T-cell (primary cell): ENCODE measurements at regions of chr14 and their contacts with region 1.

Region 1: DNA sequence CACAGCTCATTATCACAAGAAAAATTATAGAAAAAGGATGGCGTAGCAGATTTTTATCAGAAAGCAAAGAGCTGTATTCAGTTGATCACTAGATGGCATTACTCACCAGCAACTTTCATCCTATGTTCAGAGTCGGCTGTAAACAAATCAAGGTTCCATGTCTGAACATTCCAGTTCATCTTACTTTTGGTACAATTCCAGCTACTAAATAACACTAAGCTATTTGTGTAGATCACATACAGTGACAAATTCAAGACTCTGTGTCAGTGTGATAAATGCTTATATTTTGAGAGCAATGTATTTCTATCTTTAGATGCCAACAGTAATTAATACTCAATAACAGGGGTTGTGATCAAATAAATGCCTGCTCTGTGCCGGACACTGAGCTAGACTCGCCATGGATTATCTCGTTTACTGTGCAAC is 30.1 kb downstream of the NRDE2 start:
- DNase-seq: peak in 1 of 35 experiments; percentile 34
- ATAC-seq: no peak
- H3K4me3 ChIP-seq: no peak overlapping the region
- H3K4me3 Mint-ChIP-seq: no peak overlapping the region
- H3K27ac ChIP-seq: no peak overlapping the region
- H3K27ac Mint-ChIP-seq: peak overlapping the region in 1 of 2 donors; percentile 24
- H3K4me1 ChIP-seq: peaks cover 0 to 2% of the 10 kb centered on the region in 2 experiments
- H3K4me1 Mint-ChIP-seq: peaks cover 11 to 15% (median 15%) of the 10 kb centered on the region in 3 donors
- H3K27me3 ChIP-seq: no peaks in the 10 kb centered on the region
- H3K27me3 Mint-ChIP-seq: no peaks in the 10 kb centered on the region

Region 2: DNA sequence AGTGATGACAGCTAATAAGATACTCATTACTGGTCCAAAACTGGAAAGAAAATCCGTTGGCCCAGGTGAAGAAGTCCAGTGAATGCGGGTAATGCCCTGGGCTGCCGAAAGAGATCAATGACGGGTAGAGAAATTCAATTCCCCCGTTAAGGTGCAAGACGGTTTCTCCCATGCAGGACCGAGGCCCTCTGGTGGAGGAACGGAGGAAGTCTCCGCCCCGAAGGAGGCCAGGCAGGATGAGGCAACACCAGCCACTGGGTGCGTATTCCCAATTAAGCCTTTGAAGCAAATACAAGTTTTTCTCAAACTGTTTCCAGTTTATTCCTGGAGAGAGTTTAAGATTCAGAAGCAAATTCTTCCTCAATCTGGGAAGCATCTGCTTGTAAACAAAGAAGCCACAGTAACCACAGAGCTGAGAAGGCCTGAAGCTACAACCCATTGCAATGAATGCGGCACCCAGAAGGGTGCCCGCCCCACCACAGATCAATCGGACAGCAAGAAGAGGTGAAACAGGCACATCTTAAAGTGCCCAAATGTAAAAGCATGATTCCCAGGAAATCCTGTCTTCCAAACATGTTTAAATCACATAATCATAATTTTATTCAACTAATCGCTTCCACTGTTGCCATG is 396.0 kb after region 1 on chr14:
- CTCF ChIA-PET with region 1: interaction called in 1 of 2 experiments, 22 read pairs
- POLR2A ChIA-PET with region 1: no interaction called
- DNase-seq: peak; percentile 47 to 79 (median 67)
- ATAC-seq: peak; percentile 79 to 96 (median 88)
- H3K4me3 ChIP-seq: no peak overlapping the region
- H3K4me3 Mint-ChIP-seq: no peak overlapping the region
- H3K27ac ChIP-seq: no peak overlapping the region
- H3K27ac Mint-ChIP-seq: no peak overlapping the region
- H3K4me1 ChIP-seq: peaks cover 0 to 4% of the 10 kb centered on the region in 2 experiments
- H3K4me1 Mint-ChIP-seq: peaks cover 0 to 7% (median 7%) of the 10 kb centered on the region in 3 donors
- H3K27me3 ChIP-seq: no peaks in the 10 kb centered on the region
- H3K27me3 Mint-ChIP-seq: peaks cover 0 to 1% of the 10 kb centered on the region in 2 donors

Region 3: GRCh38 chr14:91317381-91318308 is 1016.0 kb after region 1 on chr14:
- CTCF ChIA-PET with region 1: no interaction called
- POLR2A ChIA-PET with region 1: no interaction called
- DNase-seq: peak; percentile 72 to 95 (median 81)
- ATAC-seq: peak; percentile 48 to 81 (median 77)
- H3K4me3 ChIP-seq: peak overlapping the region in 1 of 2 donors; percentile 11
- H3K4me3 Mint-ChIP-seq: peak overlapping the region; percentile 65 to 73 (median 68)
- H3K27ac ChIP-seq: peak overlapping the region; percentile 93
- H3K27ac Mint-ChIP-seq: peak overlapping the region; percentile 97 to 98
- H3K4me1 ChIP-seq: peaks cover 42 to 96% of the 10 kb centered on the region in 2 experiments
- H3K4me1 Mint-ChIP-seq: peaks cover 80 to 88% (median 80%) of the 10 kb centered on the region in 3 donors
- H3K27me3 ChIP-seq: no peaks in the 10 kb centered on the region
- H3K27me3 Mint-ChIP-seq: no peaks in the 10 kb centered on the region